ENCODE measurements at regions of chr17 and their contacts with region 1.

Region 1: GRCh38 chr17:65422714-65423113 is 138.7 kb downstream of the AXIN2 start:
- DNase-seq: no peak
- ATAC-seq: no peak
- H3K4me3 ChIP-seq: no peak overlapping the region
- H3K27ac ChIP-seq: peak overlapping the region in 3 of 4 donors; percentile 34 to 60 (median 38)
- H3K4me1 ChIP-seq: peaks cover 10% of the 10 kb centered on the region in 2 donors
- H3K27me3 ChIP-seq: no peaks in the 10 kb centered on the region
- CTCF ChIP-seq: no peak
- POLR2A ChIP-seq: no peak

Region 2: GRCh38 chr17:65013613-65014391 is 408.9 kb before region 1 on chr17:
- in situ Hi-C with region 1: no loop called
- intact Hi-C with region 1: no loop called
- DNase-seq: no peak
- ATAC-seq: no peak
- H3K4me3 ChIP-seq: no peak overlapping the region
- H3K27ac ChIP-seq: peak overlapping the region in 1 of 4 donors; percentile 20
- H3K4me1 ChIP-seq: peaks cover 33 to 60% of the 10 kb centered on the region in 2 donors
- H3K27me3 ChIP-seq: no peaks in the 10 kb centered on the region
- CTCF ChIP-seq: no peak
- POLR2A ChIP-seq: no peak

Region 3: DNA sequence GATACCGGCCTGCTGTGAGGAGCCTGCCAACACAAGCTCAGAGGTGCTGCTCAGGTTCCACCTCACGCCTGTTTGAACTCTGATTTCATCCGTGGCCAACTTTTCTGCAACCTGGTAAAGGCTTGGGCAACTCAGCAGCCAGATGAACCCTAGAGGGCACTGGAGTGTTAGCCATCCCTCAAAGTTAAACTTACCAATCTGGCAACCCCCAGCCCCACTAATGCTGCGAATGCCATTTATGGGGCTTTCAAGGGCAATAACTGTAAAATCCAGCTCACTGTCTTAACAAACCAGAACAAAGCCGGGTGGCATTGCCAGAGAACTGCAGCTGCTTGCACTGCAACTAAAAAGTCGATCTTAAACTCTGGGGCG is 33.2 kb after region 1 on chr17:
- in situ Hi-C with region 1: no loop called
- intact Hi-C with region 1: loop called (anchors 2 kb)
- DNase-seq: peak; percentile 64 to 84
- ATAC-seq: peak; percentile 83 to 89
- H3K4me3 ChIP-seq: no peak overlapping the region
- H3K27ac ChIP-seq: peak overlapping the region; percentile 69 to 89 (median 75)
- H3K4me1 ChIP-seq: peaks cover 33 to 35% of the 10 kb centered on the region in 2 donors
- H3K27me3 ChIP-seq: no peaks in the 10 kb centered on the region
- CTCF ChIP-seq: peak in 4 of 5 experiments; percentile 47 to 65 (median 58)
- POLR2A ChIP-seq: peak in 1 of 2 donors; percentile 45

Region 4: GRCh38 chr17:66165513-66166123 is 742.9 kb after region 1 on chr17:
- in situ Hi-C with region 1: no loop called
- intact Hi-C with region 1: loop called (anchors 5 kb)
- DNase-seq: no peak
- ATAC-seq: no peak
- H3K4me3 ChIP-seq: no peak overlapping the region
- H3K27ac ChIP-seq: no peak overlapping the region
- H3K4me1 ChIP-seq: peaks cover 0 to 3% of the 10 kb centered on the region in 2 donors
- H3K27me3 ChIP-seq: no peaks in the 10 kb centered on the region
- CTCF ChIP-seq: peak; percentile 57 to 66 (median 63)
- POLR2A ChIP-seq: no peak

Measured in gastrocnemius medialis (tissue), 4 donors.